H1 (cell line): ENCODE measurements at regions of chr18 and their contacts with region 1.

Region 1: GRCh38 chr18:54983041-54983686 is 23.9 kb upstream of the CCDC68 start:
- DNase-seq: no peak
- H3K4me3 ChIP-seq: no peak overlapping the region
- H3K27ac ChIP-seq: no peak overlapping the region
- H3K4me1 ChIP-seq: no peaks in the 10 kb centered on the region
- H3K27me3 ChIP-seq: no peaks in the 10 kb centered on the region
- CTCF ChIP-seq: peak in 2 of 3 experiments; percentile 57 to 63; a peak in 3 of 4 replicates
- EP300 ChIP-seq: no peak
- POLR2A ChIP-seq: no peak
- RAD21 ChIP-seq: peak; percentile 79 to 84

Region 2: DNA sequence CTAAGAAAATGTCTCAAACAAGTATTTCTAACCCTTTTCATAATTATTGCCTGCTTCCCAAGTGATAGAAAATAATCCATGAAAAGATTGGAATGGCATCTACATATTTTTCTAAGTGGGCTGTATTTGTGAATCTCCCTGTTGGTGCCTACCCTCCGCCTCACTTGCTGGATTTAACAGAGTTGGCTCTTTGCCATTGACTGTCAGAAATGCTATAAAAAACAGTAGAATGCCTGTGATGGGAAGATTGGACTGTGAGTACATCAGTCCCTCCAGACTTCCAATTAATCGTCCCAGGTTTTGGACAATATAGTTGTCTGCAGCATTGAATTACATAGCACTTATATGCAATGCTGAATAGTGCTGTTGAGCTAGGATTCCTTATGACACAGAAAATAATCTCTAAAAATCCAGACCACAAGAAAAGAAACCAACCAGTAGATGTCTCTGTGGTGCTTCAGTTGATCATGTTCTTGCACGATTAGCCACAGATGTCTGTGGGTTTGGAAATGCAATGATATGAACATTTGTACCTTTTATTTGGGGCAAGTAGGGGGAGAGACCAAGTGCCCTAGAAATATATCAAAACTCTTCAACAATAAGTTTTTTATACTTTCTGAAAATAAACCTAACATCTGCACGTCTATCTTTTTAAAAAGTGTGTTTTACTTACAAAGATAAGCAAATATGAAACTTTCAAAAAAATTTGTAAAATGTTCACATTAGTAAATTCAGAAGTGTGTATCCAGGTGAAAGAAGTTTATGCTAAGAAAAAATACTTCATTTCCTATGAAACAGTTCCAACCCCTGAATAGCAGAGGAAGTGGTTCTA is 303.6 kb before region 1 on chr18:
- CTCF ChIA-PET with region 1: interaction called, 26 read pairs
- POLR2A ChIA-PET with region 1: no interaction called
- DNase-seq: no peak
- H3K4me3 ChIP-seq: no peak overlapping the region
- H3K27ac ChIP-seq: no peak overlapping the region
- H3K4me1 ChIP-seq: no peaks in the 10 kb centered on the region
- H3K27me3 ChIP-seq: no peaks in the 10 kb centered on the region
- CTCF ChIP-seq: peak in 2 of 3 experiments; percentile 48 to 55; a peak in 3 of 4 replicates
- EP300 ChIP-seq: no peak
- POLR2A ChIP-seq: no peak
- RAD21 ChIP-seq: peak; percentile 88 to 90

Region 3: DNA sequence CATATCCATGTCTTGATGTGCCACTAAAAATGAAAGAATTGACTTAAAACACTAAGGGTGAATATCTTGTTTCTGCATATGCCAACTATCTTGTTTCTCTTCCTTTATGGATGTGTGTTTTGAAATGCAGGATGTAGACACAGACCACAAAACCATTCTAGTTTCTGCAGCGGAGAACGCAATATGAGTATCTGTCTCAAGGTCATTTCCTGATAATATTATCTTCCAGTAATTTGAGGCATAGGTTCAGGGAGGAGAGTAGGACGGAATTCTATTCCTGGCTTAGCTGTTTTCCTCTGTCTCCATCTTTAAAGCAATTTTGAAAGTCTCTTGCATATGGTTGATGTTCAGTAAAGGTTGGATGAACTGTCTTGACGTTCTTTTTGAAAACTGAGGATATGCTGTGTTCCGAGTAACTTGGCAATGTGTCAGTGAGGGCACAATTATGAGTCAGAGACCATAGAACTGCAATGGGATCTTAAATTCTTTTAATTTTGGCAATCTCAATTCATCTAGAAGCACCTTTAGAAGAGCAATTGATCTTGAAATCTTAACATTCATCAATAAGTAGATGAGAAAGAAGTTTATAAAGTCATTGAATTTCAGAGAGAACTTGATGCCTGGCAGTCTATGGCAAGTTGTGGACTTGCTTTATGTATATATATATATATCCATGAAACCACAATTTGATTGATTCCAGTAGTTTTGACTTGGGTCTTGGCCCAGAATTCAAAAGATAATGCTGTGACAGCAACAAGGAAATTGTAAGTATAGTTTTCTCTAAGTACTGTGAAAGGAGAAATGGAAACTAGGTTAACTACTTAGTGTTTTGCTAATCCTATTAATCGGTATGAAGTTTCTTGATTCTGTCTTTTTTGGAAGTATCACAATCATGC is 130.1 kb before region 1 on chr18:
- CTCF ChIA-PET with region 1: no interaction called
- POLR2A ChIA-PET with region 1: no interaction called
- DNase-seq: no peak
- H3K4me3 ChIP-seq: no peak overlapping the region
- H3K27ac ChIP-seq: no peak overlapping the region
- H3K4me1 ChIP-seq: no peaks in the 10 kb centered on the region
- H3K27me3 ChIP-seq: no peaks in the 10 kb centered on the region
- CTCF ChIP-seq: no peak
- EP300 ChIP-seq: no peak
- POLR2A ChIP-seq: no peak
- RAD21 ChIP-seq: no peak

Region 4: DNA sequence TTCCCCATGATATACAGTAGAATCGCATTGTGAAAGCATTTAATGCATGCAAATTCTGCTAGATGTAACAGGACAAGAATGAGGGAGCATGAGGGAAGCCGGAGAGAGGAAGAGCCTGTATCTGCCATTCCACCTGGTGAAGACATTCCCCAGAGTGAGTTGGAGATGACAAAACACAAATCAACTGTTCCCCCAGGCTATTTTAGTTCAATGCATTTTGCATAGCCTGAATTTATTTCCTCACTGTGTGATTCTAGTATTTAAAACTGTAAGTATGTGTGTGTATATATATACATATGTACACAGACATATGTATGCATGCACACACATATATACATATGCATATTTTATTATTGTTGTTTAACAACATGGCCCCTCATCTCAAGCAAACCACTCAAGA is 78.6 kb before region 1 on chr18:
- CTCF ChIA-PET with region 1: no interaction called
- POLR2A ChIA-PET with region 1: no interaction called
- DNase-seq: no peak
- H3K4me3 ChIP-seq: no peak overlapping the region
- H3K27ac ChIP-seq: no peak overlapping the region
- H3K4me1 ChIP-seq: peaks cover 0 to 2% (median 0%) of the 10 kb centered on the region in 4 experiments; a peak in 1 of 7 replicates
- H3K27me3 ChIP-seq: no peaks in the 10 kb centered on the region
- CTCF ChIP-seq: no peak
- EP300 ChIP-seq: no peak
- POLR2A ChIP-seq: no peak
- RAD21 ChIP-seq: no peak

Region 5: GRCh38 chr18:54972690-54973445 is 10.3 kb before region 1 on chr18:
- CTCF ChIA-PET with region 1: interaction called, 12 read pairs
- POLR2A ChIA-PET with region 1: interaction called, 4 read pairs
- DNase-seq: no peak
- H3K4me3 ChIP-seq: no peak overlapping the region
- H3K27ac ChIP-seq: no peak overlapping the region
- H3K4me1 ChIP-seq: no peaks in the 10 kb centered on the region
- H3K27me3 ChIP-seq: no peaks in the 10 kb centered on the region
- CTCF ChIP-seq: no peak
- EP300 ChIP-seq: no peak
- POLR2A ChIP-seq: no peak
- RAD21 ChIP-seq: no peak

Region 6: DNA sequence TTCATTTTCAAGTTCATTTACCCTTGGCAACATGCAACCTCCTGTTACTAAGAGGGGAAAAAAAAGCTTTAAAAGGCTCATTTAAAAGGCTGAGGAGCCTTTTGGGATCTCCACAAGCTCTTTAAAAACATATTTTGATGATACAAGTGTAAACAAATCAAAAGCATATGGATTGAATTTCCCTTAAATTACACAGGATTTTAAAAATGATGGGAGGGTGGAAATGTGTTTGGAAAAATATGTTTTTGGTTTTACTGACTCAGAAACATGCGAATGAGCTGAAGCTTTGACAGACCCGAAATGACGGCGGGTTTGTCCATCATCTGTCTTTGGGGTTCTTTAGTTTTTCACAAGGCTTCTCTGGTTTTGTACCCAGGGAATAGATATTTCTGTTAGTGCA is 156.7 kb after region 1 on chr18:
- CTCF ChIA-PET with region 1: no interaction called
- POLR2A ChIA-PET with region 1: no interaction called
- DNase-seq: no peak
- H3K4me3 ChIP-seq: no peak overlapping the region
- H3K27ac ChIP-seq: no peak overlapping the region
- H3K4me1 ChIP-seq: no peaks in the 10 kb centered on the region
- H3K27me3 ChIP-seq: no peaks in the 10 kb centered on the region
- CTCF ChIP-seq: no peak
- EP300 ChIP-seq: no peak
- POLR2A ChIP-seq: no peak
- RAD21 ChIP-seq: no peak

Region 7: GRCh38 chr18:55189972-55190371 is 206.8 kb after region 1 on chr18:
- CTCF ChIA-PET with region 1: no interaction called
- POLR2A ChIA-PET with region 1: no interaction called
- DNase-seq: no peak
- H3K4me3 ChIP-seq: no peak overlapping the region
- H3K27ac ChIP-seq: no peak overlapping the region
- H3K4me1 ChIP-seq: peaks cover 0 to 2% (median 0%) of the 10 kb centered on the region in 4 experiments; a peak in 1 of 7 replicates
- H3K27me3 ChIP-seq: no peaks in the 10 kb centered on the region
- CTCF ChIP-seq: no peak
- EP300 ChIP-seq: no peak
- POLR2A ChIP-seq: no peak
- RAD21 ChIP-seq: no peak